Activated T-helper 1 cell treated with anti-CD3 and anti-CD28 coated beads, Interleukin-12 subunit alpha, Interleukin-12 subunit beta, Interleukin-2, Interleukin-4 antibody, amounts not matched to agents 30 ng/mL and 10 ng/mL and 1 ng/mL, durations not matched to agents 14 hours and 24 hours and 36 hours (primary cell): ENCODE measurements at regions of chr12 and their contacts with region 1.

Region 1: GRCh38 chr12:4538207-4539160 is at the start of gene RAD51AP1:
- DNase-seq: peak; percentile 93
- H3K4me3 Mint-ChIP-seq: peak within 1 kb of the TSS; percentile 98
- H3K27ac Mint-ChIP-seq: peak within 1 kb of the TSS; percentile 91
- H3K4me1 Mint-ChIP-seq: peaks cover 30% of the 10 kb centered on the region
- H3K27me3 Mint-ChIP-seq: peaks cover 2% of the 10 kb centered on the region
- total RNA-seq, gene RAD51AP1: 34.1 and 39.4 TPM in 2 replicates

Region 2: DNA sequence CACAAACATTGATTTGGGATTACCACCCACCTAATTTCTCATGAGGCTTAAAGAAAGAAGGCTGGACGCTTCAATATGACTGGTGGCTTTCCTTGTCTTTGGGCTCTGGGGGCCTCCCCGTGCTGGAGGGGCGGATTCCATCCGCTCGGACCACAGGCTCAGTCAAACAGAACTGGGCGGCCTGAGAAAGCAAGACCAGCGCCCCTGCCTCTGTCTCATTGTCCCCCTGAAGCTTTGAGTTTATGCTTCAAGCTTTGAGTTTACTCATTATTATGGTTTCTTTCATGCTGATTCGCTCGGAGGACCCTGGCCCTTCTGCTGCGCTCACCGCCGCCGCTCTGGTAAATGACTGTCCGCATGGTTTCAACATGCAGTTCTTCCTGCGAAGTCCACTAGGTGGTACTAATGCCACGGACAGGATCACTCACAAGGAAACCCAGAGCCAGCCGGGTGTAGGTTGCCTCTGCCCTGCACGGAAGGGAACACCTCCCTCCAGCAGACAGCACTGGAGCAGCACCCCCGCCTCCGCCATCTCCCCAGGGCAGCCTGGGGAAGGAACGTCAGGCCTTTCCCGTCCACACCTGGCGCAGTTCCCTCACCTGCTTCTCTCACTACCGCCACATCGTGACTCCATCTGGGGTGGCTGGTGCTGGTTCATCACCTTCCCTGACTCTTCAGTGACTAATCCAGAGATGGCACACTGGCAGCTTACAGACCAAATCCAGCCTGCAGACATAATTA is 230.7 kb before region 1 on chr12:
- intact Hi-C with region 1: loop called (anchors 5 kb)
- DNase-seq: no peak
- H3K4me3 Mint-ChIP-seq: no peak overlapping the region
- H3K27ac Mint-ChIP-seq: no peak overlapping the region
- H3K4me1 Mint-ChIP-seq: peaks cover under 1% of the 10 kb centered on the region
- H3K27me3 Mint-ChIP-seq: no peaks in the 10 kb centered on the region

Region 3: DNA sequence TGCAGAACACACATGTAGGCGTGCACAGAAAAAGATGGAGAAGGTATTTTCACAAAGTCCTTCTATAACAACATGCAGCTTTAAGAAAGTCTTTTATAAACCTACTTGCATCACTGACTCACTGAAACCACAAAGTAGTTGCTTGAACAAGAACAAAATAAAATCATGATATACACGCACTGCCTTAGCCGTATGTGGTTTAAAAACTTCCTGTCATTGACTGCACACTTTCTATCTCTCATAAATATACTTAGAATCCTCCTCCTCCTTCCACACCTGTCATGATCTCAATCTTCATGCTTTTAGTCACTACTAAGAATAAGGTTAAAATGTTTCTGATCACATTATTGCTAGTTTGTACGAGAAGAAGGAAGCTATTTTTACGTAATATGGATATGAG is 31.6 kb before region 1 on chr12:
- intact Hi-C with region 1: loop called (anchors 1 kb)
- DNase-seq: peak; percentile 29
- H3K4me3 Mint-ChIP-seq: peak overlapping the region; percentile 40
- H3K27ac Mint-ChIP-seq: peak overlapping the region; percentile 42
- H3K4me1 Mint-ChIP-seq: peaks cover 36% of the 10 kb centered on the region
- H3K27me3 Mint-ChIP-seq: no peaks in the 10 kb centered on the region

Region 4: DNA sequence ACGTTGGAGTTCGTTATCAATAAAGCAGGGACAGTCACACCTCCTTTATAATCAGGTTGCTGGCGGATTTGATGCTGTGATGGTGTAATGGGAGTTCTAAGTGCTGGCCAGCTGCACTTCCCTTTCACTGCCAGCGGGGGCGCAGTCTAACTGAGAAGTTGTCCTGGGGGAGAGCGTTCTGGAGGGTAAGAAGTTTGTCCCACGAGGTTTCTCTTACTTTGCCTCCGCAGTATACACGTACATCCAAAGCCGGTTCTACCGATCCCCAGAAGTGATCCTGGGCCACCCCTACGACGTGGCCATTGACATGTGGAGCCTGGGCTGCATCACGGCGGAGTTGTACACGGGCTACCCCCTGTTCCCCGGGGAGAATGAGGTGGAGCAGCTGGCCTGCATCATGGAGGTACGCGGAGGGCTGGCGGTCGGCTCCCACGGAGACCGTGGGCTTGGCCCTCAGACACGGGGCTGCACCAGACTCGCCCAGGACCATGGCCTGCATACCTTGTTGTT is 66.3 kb after region 1 on chr12:
- intact Hi-C with region 1: loop called (anchors 2 kb)
- DNase-seq: peak; percentile 67
- H3K4me3 Mint-ChIP-seq: peak overlapping the region; percentile 96
- H3K27ac Mint-ChIP-seq: peak overlapping the region; percentile 88
- H3K4me1 Mint-ChIP-seq: peaks cover 18% of the 10 kb centered on the region
- H3K27me3 Mint-ChIP-seq: peaks cover 25% of the 10 kb centered on the region

Region 5: DNA sequence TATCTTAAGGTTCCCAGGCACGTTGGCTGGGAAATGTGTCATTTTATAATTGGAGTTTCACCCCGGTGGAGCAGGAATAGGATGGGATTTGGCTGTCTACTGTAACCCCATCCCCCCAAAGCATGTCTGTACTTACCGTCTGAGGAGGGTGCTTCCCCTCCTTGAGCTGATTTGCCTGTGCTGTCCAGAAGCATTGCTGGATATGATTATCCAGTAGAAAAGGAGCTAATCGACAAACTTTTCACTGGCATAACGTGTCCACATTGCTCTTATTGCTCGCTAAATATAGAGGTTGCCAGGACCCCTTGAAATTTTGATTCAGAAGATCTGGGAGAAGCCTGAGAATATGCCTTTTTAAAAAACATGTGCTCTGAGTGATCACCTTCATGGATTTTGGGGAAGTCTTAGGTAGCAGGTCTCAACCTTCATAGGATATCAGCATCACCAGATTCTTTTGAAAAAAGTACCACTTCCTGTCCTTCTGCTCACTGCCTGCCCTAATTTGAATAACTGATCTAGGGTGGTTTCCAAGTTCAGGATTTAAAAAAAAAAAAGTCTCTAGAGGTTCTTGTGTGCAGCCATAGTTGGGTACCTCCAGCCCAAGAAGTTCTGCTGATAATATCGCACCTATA is 290.8 kb after region 1 on chr12:
- intact Hi-C with region 1: loop called (anchors 5 kb)
- DNase-seq: no peak
- H3K4me3 Mint-ChIP-seq: peak overlapping the region; percentile 83
- H3K27ac Mint-ChIP-seq: peak overlapping the region; percentile 99
- H3K4me1 Mint-ChIP-seq: peaks cover 71% of the 10 kb centered on the region
- H3K27me3 Mint-ChIP-seq: no peaks in the 10 kb centered on the region